B cell (primary cell): ENCODE measurements at regions of chr7 and their contacts with region 1.

Region 1: DNA sequence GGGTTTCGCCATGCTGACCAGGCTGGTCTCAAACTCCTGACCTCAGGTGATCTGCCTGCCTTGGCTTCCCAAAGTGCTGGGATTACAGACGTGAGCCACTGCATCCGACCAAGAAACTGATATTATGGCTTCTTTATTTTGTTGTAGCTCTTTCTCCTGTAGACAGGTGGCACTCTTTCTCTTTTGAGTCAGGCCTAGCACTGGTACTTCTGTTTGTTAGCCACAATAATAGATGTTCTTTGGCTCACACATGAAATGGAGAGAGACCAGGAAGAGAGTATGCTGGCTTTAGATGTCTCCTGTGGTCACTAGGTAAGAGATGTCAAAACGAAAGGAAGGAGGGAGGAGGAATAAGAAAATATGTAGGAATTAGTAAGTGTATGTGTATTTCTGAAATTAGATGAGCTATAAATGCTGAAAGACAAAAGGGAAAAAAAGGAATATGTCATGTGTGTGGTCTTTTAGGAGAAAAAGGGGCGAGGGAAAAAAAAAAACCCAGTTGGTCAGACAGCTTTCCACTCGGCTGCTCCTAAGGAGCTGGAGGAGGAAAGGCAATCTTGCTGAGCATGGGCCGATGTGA is 78.7 kb downstream of the CLEC2L start:
- DNase-seq: peak; percentile 18
- ATAC-seq: no peak
- H3K4me3 ChIP-seq: no peak overlapping the region
- H3K4me3 Mint-ChIP-seq: no peak overlapping the region
- H3K27ac ChIP-seq: no peak overlapping the region
- H3K27ac Mint-ChIP-seq: no peak overlapping the region
- H3K4me1 ChIP-seq: no peaks in the 10 kb centered on the region
- H3K4me1 Mint-ChIP-seq: no peaks in the 10 kb centered on the region
- H3K27me3 ChIP-seq: no peaks in the 10 kb centered on the region
- H3K27me3 Mint-ChIP-seq: no peaks in the 10 kb centered on the region
- CTCF ChIP-seq: peak; percentile 55

Region 2: GRCh38 chr7:139588632-139589031 is 13.6 kb before region 1 on chr7:
- CTCF ChIA-PET with region 1: interaction called, 14 read pairs
- POLR2A ChIA-PET with region 1: no interaction called
- intact Hi-C with region 1: no loop called
- DNase-seq: no peak
- ATAC-seq: no peak
- H3K4me3 ChIP-seq: no peak overlapping the region
- H3K4me3 Mint-ChIP-seq: no peak overlapping the region
- H3K27ac ChIP-seq: no peak overlapping the region
- H3K27ac Mint-ChIP-seq: no peak overlapping the region
- H3K4me1 ChIP-seq: no peaks in the 10 kb centered on the region
- H3K4me1 Mint-ChIP-seq: no peaks in the 10 kb centered on the region
- H3K27me3 ChIP-seq: no peaks in the 10 kb centered on the region
- H3K27me3 Mint-ChIP-seq: no peaks in the 10 kb centered on the region
- CTCF ChIP-seq: no peak

Region 3: DNA sequence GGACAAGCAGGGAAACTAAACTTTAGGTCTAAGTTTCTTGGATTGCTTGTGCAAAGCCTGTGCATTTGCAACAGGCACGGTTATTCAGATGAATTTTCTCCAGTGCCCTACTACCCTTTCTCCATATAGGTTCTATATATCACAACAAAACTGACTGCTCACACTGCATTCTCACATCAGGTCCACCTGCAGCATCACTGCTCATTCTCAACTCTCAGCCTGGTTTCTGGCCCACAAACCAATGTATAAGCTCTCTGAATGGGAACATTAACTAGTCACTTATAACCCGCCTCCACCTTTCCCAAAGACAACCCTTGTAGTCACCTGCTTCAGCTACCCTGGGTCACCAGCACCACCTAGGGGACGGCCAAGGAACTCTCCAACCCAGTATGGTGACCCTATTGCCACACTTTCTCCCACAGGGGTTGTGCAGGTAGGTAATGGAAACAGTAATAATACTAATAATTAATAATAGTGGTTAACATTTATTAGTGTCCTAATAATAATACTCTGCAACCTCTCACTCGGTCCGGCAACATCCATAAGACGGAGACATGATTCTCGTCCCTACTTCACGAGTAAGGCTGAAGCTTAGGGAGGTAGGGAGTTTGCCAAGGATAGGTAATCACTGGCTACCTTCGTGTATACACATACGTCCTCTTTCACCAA is 18.6 kb after region 1 on chr7:
- CTCF ChIA-PET with region 1: interaction called, 19 read pairs
- POLR2A ChIA-PET with region 1: no interaction called
- intact Hi-C with region 1: no loop called
- DNase-seq: peak; percentile 36
- ATAC-seq: no peak
- H3K4me3 ChIP-seq: no peak overlapping the region
- H3K4me3 Mint-ChIP-seq: no peak overlapping the region
- H3K27ac ChIP-seq: no peak overlapping the region
- H3K27ac Mint-ChIP-seq: no peak overlapping the region
- H3K4me1 ChIP-seq: no peaks in the 10 kb centered on the region
- H3K4me1 Mint-ChIP-seq: peaks cover 4% of the 10 kb centered on the region
- H3K27me3 ChIP-seq: no peaks in the 10 kb centered on the region
- H3K27me3 Mint-ChIP-seq: no peaks in the 10 kb centered on the region
- CTCF ChIP-seq: peak; percentile 81

Region 4: DNA sequence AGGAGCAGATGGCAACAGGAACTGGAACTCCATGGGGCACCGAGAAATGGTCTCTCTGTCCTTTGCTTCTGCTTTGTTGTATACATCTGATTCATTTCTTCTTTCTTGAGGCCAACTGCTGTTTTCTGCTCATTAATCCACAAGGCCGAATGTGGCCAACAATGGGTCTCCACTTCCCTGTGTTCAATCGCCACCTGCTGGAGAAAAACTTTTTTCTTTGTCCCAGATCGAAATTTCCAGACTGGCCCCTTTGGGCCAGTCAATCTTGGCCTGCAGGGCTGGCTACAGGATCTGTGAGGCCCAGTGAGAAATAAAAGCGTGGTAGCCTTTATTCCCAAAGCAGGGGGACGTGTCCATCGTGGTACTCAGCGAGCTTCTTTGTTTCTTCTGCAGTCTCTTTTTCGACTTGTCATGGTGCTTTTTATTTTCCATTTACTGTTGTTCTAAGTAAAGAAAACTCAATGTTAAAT is 401.7 kb after region 1 on chr7:
- CTCF ChIA-PET with region 1: interaction called, 18 read pairs
- POLR2A ChIA-PET with region 1: no interaction called
- intact Hi-C with region 1: no loop called
- DNase-seq: peak; percentile 61
- ATAC-seq: peak; percentile 49
- H3K4me3 ChIP-seq: no peak overlapping the region
- H3K4me3 Mint-ChIP-seq: no peak overlapping the region
- H3K27ac ChIP-seq: no peak overlapping the region
- H3K27ac Mint-ChIP-seq: peak overlapping the region; percentile 46
- H3K4me1 ChIP-seq: peaks cover 0 to 2% of the 10 kb centered on the region in 2 donors
- H3K4me1 Mint-ChIP-seq: peaks cover 2% of the 10 kb centered on the region
- H3K27me3 ChIP-seq: no peaks in the 10 kb centered on the region
- H3K27me3 Mint-ChIP-seq: no peaks in the 10 kb centered on the region
- CTCF ChIP-seq: peak; percentile 75